ENCODE measurements at regions of chr1 and their contacts with region 1.

Region 1: DNA sequence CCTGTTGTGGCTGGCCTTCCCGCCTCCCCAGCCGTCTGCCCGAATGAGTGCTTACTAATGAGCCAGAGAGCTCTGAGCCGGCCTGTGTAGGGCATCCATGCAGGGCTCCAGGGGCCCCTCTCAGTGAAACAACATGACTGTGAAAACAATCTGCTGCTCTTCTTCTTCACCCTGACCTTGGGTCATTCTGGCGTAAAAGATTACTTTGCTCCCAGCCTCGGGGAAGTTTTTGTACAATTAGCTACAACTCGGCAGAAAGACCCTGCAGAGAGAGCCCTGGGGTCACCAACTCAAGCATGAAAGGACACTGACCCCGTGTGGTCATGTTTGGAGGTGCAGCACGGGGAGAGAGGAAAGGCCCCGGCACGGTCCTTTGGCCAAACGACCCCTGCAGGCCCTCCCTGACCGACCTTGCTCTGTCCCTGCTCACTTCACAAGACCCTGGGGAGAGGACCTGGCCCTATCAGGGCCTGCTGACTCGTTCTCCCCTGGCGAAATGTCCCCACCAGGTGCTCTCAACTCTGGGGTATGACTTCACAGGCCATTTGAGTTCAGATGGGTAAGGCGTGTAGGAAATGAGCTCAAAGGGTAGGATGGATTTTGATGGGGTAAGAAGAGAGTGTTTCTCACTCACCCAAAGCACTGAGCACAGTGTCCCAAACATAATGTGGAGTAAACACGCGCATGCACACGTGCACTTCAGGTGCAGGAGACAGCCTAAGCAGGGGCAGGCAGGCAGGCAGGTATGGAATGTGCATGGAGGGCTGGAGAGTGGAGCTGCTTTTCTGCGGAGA is 22.9 kb upstream of the FAM20B start:
- DNase-seq: peak; percentile 68
- ATAC-seq: peak; percentile 62
- H3K4me3 ChIP-seq: peak overlapping the region; percentile 29; the same call in 1 of the 2 replicates
- H3K27ac ChIP-seq: no peak overlapping the region
- H3K4me1 ChIP-seq: 0 out of 2 replicates have a peak, but pooled peaks cover 9% of the 10 kb centered on the region
- H3K27me3 ChIP-seq: no peaks in the 10 kb centered on the region
- CTCF ChIP-seq: peak; percentile 88

Region 2: DNA sequence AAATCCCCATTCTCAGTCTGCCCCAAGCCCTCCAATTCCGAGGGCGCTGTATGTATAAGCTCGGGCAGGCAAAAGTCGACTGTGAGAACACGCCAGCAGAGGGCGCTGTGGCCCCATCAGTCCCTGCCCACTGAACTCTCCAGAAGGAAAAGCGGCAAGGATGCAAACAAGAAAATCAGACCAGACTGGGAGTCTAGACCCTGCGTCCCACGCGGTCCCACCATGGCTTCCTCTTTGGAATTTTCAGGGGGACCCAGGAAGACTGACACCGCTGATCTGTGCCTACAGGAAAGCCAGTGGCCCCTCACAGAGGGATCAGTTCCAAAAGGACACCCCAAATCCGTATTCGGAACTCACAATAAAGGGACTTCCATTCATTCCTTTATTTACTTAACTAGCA is 470.4 kb before region 1 on chr1:
- CTCF ChIA-PET with region 1: interaction called, 5 read pairs
- POLR2A ChIA-PET with region 1: interaction called, 4 read pairs
- intact Hi-C with region 1: loop called (anchors 2 kb)
- DNase-seq: peak; percentile 85
- ATAC-seq: peak; percentile 42
- H3K4me3 ChIP-seq: peak overlapping the region; percentile 46; the same call in 1 of the 2 replicates
- H3K27ac ChIP-seq: no peak overlapping the region
- H3K4me1 ChIP-seq: peaks cover 45% of the 10 kb centered on the region
- H3K27me3 ChIP-seq: no peaks in the 10 kb centered on the region
- CTCF ChIP-seq: peak; percentile 82

Region 3: DNA sequence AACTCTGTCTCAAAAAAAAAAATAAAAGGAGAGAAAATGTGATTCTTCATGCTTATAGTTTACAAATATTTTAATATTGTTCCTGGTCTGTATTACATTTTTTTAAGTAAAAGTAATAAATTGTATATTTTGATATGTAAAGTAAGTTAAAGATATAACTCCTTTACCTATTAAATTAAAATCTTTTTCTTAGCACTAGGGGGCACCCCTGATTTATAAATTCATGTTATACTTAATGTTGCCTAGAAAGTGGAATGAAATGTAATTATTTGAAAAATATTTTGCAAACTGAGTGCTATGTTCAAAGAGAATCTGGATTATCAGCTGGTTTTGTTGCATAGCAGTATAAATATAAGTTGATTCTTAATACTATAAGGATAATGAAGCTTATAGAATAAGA is 228.5 kb before region 1 on chr1:
- CTCF ChIA-PET with region 1: no interaction called
- POLR2A ChIA-PET with region 1: no interaction called
- intact Hi-C with region 1: loop called (anchors 1 kb)
- DNase-seq: peak; percentile 46
- ATAC-seq: no peak
- H3K4me3 ChIP-seq: no peak overlapping the region
- H3K27ac ChIP-seq: no peak overlapping the region
- H3K4me1 ChIP-seq: no peaks in the 10 kb centered on the region
- H3K27me3 ChIP-seq: no peaks in the 10 kb centered on the region
- CTCF ChIP-seq: peak; percentile 41; the same call in 1 of the 2 replicates

Region 4: DNA sequence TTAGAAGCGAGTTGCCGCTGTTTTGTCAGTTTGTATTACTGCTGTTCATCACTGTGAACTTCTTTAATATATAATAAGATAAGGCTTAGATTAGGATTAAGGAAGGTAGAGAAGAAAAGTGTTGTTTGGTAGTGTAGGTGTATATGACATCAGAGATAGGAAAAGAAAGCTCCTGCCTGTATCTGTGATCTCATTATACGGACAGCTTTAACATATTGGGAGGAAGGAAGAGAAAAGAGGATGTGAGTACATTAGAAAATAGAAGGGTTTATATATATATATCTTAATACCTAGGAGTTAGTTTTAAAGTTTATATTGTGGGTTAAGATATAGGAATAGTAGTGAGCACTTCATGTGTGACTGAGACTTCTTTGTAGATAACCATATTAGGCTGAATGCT is 206.7 kb before region 1 on chr1:
- CTCF ChIA-PET with region 1: no interaction called
- POLR2A ChIA-PET with region 1: no interaction called
- intact Hi-C with region 1: no loop called
- DNase-seq: no peak
- ATAC-seq: no peak
- H3K4me3 ChIP-seq: no peak overlapping the region
- H3K27ac ChIP-seq: no peak overlapping the region
- H3K4me1 ChIP-seq: no peaks in the 10 kb centered on the region
- H3K27me3 ChIP-seq: no peaks in the 10 kb centered on the region
- CTCF ChIP-seq: no peak

Region 5: DNA sequence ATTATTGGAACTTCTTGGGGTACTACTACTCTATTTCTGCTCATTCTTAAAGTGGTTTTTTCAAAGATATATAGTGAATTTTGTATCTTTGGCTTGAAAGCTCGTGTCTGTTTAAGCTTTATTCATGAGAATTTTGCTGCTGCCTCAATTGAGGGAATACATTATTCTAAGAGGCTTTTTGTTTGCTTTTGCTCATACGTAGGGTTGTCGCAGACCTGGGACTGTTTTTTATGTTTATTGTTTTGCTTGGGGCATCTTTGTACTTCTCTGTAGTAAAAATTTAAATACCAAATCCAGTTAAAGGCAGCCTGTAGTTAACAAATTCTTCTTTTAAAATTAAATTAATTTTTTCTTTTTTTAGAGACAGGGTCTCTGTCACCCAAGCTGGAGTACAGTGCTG is 194.2 kb before region 1 on chr1:
- CTCF ChIA-PET with region 1: no interaction called
- POLR2A ChIA-PET with region 1: no interaction called
- intact Hi-C with region 1: loop called (anchors 1 kb)
- DNase-seq: no peak
- ATAC-seq: no peak
- H3K4me3 ChIP-seq: no peak overlapping the region
- H3K27ac ChIP-seq: no peak overlapping the region
- H3K4me1 ChIP-seq: no peaks in the 10 kb centered on the region
- H3K27me3 ChIP-seq: no peaks in the 10 kb centered on the region
- CTCF ChIP-seq: no peak